CD4-positive, alpha-beta memory T cell (primary cell): ENCODE measurements at regions of chr13 and their contacts with region 1.

Region 1: GRCh38 chr13:30346153-30346788 is 38.9 kb upstream of the KATNAL1 start:
- DNase-seq: peak; percentile 76 to 82 (median 79)
- H3K4me3 ChIP-seq: peak overlapping the region in 1 of 2 donors; percentile 10
- H3K4me3 Mint-ChIP-seq: peak overlapping the region; percentile 45 to 88 (median 70)
- H3K27ac ChIP-seq: no peak overlapping the region
- H3K27ac Mint-ChIP-seq: peak overlapping the region; percentile 10 to 86 (median 45)
- H3K4me1 ChIP-seq: peaks cover 42% of the 10 kb centered on the region
- H3K4me1 Mint-ChIP-seq: peaks cover 35 to 48% (median 41%) of the 10 kb centered on the region in 4 donors
- H3K27me3 ChIP-seq: no peaks in the 10 kb centered on the region
- H3K27me3 Mint-ChIP-seq: no peaks in the 10 kb centered on the region

Region 2: GRCh38 chr13:30289533-30289932 is 56.7 kb before region 1 on chr13:
- CTCF ChIA-PET with region 1: no interaction called
- POLR2A ChIA-PET with region 1: no interaction called
- intact Hi-C with region 1: no loop called
- DNase-seq: no peak
- H3K4me3 ChIP-seq: no peak overlapping the region
- H3K4me3 Mint-ChIP-seq: no peak overlapping the region
- H3K27ac ChIP-seq: no peak overlapping the region
- H3K27ac Mint-ChIP-seq: no peak overlapping the region
- H3K4me1 ChIP-seq: peaks cover 5% of the 10 kb centered on the region
- H3K4me1 Mint-ChIP-seq: peaks cover 4 to 16% (median 13%) of the 10 kb centered on the region in 4 donors
- H3K27me3 ChIP-seq: no peaks in the 10 kb centered on the region
- H3K27me3 Mint-ChIP-seq: no peaks in the 10 kb centered on the region

Region 3: DNA sequence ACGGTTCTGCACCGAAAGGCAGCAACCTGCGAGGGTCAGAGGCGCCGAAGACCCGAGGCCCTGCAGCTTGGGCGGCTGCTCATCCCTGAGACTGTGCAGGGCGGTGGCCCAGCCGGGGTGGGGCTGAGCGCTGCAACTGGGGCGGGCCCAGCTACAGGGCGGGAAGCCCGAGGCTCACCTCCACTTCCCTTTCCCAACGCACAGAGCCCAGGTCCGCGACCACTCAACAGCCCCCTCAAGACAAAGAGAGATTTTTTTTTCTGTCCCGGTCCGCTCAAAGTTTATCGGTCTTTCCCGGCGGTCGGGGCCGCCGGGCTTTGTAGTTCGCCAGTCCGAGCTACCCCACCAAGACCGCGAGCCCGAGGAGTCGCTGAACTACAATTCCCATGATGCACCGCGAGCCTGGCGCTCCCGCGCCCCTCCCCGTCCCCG is 39.5 kb before region 1 on chr13:
- CTCF ChIA-PET with region 1: interaction called, 9 read pairs
- POLR2A ChIA-PET with region 1: interaction called, 5 read pairs
- intact Hi-C with region 1: loop called (anchors 2 kb)
- DNase-seq: peak; percentile 88 to 92 (median 89)
- H3K4me3 ChIP-seq: peak overlapping the region; percentile 55 to 79
- H3K4me3 Mint-ChIP-seq: peak overlapping the region; percentile 90 to 93 (median 91)
- H3K27ac ChIP-seq: peak overlapping the region; percentile 68
- H3K27ac Mint-ChIP-seq: peak overlapping the region; percentile 75 to 93 (median 90)
- H3K4me1 ChIP-seq: peaks cover 28% of the 10 kb centered on the region
- H3K4me1 Mint-ChIP-seq: peaks cover 25 to 46% (median 30%) of the 10 kb centered on the region in 4 donors
- H3K27me3 ChIP-seq: no peaks in the 10 kb centered on the region
- H3K27me3 Mint-ChIP-seq: no peaks in the 10 kb centered on the region

Region 4: DNA sequence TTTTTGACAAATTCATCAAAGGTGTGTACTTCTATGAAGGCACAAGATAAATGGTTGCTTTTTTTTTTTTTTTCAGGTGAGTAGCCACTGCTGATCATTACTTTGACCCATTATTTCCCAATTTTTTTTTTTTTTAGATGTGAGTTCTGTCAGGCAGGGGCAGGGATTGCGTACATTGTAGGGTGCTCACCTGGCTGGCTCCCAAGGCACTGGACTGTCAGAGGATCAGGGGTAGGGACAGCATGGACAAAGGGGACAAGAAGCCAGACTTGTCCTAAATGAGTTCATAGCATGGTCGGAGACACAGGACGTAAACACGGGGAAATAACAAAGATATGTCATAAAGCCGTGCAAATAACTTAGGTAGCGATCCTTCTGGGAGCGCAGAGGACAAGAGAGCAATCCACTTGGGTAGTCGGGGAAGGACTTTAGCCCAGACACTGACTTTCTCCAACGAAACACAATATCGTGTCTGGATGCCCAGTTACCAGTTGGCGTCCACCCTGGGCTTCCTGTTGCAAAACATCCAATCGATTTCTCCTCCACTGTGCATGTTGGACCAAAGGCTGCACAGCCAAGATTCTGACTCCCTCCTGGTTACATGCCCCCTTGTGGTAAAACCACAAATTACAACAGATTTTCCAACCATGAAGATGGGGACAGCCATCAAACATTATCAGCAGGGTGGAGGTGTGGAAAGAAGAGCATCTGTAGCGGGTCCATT is 11.4 kb before region 1 on chr13:
- CTCF ChIA-PET with region 1: interaction called, 18 read pairs
- POLR2A ChIA-PET with region 1: interaction called, 14 read pairs
- intact Hi-C with region 1: no loop called
- DNase-seq: peak in 4 of 5 donors; percentile 22 to 47 (median 34)
- H3K4me3 ChIP-seq: no peak overlapping the region
- H3K4me3 Mint-ChIP-seq: no peak overlapping the region
- H3K27ac ChIP-seq: no peak overlapping the region
- H3K27ac Mint-ChIP-seq: peak overlapping the region in 1 of 7 donors; percentile 16
- H3K4me1 ChIP-seq: peaks cover 9% of the 10 kb centered on the region
- H3K4me1 Mint-ChIP-seq: peaks cover 13 to 35% (median 22%) of the 10 kb centered on the region in 4 donors
- H3K27me3 ChIP-seq: no peaks in the 10 kb centered on the region
- H3K27me3 Mint-ChIP-seq: no peaks in the 10 kb centered on the region